ENCODE measurements at regions of chr2 and their contacts with region 1.

Region 1: GRCh38 chr2:6993229-6993640 is 76.0 kb downstream of the RNF144A start:
- DNase-seq: no peak

Region 2: DNA sequence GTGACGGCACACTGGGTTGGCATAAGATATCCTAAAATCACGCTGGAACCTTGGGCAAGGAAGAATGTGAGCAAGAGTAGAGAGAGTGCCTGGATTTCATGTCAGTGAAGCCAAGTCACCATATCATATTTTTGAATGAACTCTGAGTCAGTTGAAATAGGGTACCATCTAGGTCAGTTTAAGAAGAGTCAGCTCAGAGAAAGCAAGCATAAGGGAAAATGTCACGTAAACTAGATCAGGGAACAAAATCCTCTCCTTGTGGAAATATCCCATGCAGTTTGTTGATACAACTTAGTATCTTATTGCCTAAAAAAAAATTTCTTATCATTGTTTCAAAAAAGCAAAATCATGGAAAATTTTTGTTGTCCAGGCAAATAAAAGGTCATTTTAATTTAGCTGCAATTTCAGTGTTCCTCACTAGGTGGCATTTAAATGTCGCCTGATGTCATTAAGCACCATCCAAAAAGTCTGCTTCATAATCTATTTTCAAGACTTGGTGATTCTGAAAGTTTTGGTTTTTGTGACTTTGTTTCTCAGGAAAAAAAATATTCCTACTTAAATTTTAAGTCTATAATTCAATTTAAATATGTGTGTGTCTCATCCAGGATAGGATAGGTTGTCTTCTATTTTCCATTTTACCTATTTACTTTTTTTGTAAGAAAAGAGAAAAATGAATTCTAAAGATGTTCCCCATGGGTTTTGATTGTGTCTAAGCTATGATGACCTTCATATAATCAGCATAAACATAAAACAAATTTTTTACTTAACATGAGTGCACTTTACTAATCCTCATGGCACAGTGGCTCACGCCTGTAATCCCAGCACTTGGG is 96.1 kb before region 1 on chr2:
- intact Hi-C with region 1: no loop called
- DNase-seq: no peak

Region 3: DNA sequence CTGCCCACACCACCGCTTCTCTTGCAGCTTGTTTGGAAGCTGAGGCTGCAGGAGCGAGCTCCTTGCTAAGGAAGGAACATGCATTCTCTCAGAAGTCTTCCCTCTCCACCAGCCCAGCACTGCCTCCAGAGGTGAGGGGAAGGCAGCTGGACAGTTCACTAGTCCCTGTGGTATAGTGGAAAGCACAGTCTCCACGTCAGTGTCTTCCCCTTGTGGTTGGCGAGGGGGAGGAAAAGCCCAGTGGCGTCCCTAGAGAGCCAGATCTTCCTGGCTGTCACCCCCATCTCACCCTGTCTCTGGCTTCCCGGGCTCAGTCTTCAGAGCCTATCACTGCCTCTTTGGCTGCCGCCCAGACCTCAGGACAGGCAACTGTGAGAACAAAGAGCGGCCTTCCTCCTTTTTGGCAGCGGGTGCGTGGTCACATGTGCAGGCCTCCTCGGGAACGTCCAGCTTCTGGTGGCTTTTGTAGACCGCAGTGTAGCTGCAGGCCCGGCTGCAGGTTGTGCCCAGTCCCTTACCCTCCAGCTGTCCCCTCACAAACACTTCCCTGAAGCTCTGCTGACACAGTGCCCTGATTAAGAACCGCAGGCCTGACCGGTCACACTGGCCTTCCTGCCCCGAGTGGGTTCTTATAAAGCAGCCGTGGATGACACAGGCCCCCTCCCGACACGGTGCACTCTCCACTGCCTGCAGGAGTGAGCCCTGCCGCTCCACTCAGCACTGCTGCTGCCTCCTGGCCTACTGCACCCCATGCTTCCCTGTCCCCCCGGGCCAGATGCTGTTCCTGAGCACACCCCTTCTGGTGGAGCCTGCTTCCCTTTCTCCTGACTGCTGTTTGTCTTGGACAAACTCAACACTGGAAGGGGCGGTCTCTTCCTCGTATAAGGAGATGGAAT is 14.9 kb after region 1 on chr2:
- intact Hi-C with region 1: loop called (anchors 2 kb)
- DNase-seq: peak; percentile 96

Region 4: DNA sequence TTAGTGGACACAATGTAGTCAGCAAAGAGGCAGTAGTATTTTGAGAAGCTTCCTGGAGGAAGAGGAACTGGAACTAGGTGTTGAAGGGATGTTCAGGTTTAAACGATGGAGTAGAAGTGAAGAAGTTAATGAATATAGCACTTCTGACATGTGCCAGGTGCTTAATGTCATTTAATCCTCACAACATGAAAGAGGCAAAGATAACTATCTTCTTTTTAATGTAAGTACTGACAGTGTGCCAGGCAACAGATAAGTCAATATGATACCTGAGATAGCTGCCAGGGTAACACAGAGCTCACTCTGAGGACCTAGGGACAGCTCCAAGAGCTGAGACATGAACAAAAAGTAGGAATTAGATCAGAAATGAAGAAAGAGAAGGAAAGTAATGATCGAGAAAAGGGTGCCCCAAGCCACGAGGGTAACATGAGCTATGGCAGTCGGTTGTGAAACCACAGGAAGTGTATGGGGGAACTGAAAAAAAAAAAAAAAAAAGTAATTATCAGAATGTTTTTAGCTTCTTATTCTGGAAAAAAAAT is 64.7 kb after region 1 on chr2:
- intact Hi-C with region 1: no loop called
- DNase-seq: no peak